Natural killer cell (primary cell): ENCODE measurements at regions of chr4 and their contacts with region 1.

Region 1: DNA sequence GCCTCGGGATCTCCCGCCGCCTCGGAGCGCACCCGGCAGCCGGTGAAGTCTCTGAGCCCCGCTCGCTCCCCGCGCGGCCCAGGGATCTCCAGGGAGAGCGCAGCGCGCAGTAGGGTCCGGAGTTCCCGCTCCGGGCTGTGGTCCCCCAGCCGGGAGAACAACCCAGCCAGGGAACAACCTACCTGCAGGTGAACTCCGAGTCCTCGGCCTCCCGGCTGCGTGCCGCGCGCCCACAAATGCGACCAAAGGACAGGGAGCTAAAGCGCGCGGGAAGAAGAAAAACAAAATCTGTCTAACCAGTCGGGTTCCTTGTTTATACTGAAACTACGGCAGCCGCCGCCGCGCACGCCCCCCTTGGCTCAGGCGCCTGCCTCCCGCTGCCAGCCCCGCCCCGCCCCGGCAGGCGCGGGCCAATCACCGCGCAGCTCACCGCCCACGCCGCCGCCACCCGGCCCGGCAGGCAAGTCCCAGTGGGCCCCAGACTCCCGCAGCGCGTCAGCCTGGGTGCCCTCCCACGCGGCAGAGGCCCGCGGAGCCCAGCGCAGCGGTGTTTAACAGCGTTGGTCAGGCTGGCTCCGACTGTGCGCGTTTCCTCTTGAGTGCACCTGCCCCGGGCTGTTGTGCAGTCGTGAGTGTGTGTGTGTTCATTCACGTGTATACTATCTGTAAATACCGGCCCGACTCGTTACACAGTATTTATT is at the start of gene RASGEF1B:
- DNase-seq: peak; percentile 96
- ATAC-seq: peak; percentile 85 to 96 (median 89)
- H3K4me3 ChIP-seq: peak within 1 kb of the TSS; percentile 97
- H3K4me3 Mint-ChIP-seq: peak within 1 kb of the TSS; percentile 97
- H3K27ac ChIP-seq: peak within 1 kb of the TSS; percentile 99
- H3K27ac Mint-ChIP-seq: peak within 1 kb of the TSS; percentile 82 to 98
- H3K4me1 ChIP-seq: peaks cover 25% of the 10 kb centered on the region
- H3K4me1 Mint-ChIP-seq: peaks cover 46 to 50% of the 10 kb centered on the region in 2 donors
- H3K27me3 ChIP-seq: no peaks in the 10 kb centered on the region
- H3K27me3 Mint-ChIP-seq: no peaks in the 10 kb centered on the region
- CTCF ChIP-seq: no peak
- total RNA-seq, gene RASGEF1B: 42.9 to 106 (median 90.8) TPM

Region 2: DNA sequence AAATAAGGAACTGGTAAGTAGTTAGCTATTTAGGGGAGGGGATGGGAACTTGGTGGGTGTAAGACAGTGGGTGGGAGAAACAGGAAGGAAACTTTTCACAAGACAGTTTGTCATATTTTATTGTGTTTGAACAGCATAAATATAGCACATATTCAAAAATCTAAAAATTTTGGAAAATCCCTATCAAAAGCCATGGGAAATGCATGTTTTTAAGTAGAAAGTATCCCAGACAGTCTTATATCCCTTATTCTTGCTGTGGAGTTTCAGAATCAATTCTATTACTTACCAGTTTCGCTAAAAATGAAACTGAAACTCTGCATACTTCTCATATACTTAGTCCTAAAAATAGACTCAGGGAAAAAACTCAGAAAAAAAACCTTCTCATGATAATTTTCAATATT is 22.3 kb after region 1 on chr4:
- intact Hi-C with region 1: loop called (anchors 1 kb)
- DNase-seq: peak in 1 of 2 donors; percentile 65
- ATAC-seq: peak; percentile 21 to 47 (median 42)
- H3K4me3 ChIP-seq: peak overlapping the region; percentile 29
- H3K4me3 Mint-ChIP-seq: peak overlapping the region; percentile 93
- H3K27ac ChIP-seq: peak overlapping the region; percentile 73
- H3K27ac Mint-ChIP-seq: peak overlapping the region; percentile 92
- H3K4me1 ChIP-seq: peaks cover 19% of the 10 kb centered on the region
- H3K4me1 Mint-ChIP-seq: peaks cover 47 to 55% of the 10 kb centered on the region in 2 donors
- H3K27me3 ChIP-seq: no peaks in the 10 kb centered on the region
- H3K27me3 Mint-ChIP-seq: no peaks in the 10 kb centered on the region
- CTCF ChIP-seq: no peak

Region 3: GRCh38 chr4:81580346-81580993 is 108.7 kb after region 1 on chr4:
- intact Hi-C with region 1: loop called (anchors 10 kb)
- DNase-seq: no peak
- ATAC-seq: no peak
- H3K4me3 ChIP-seq: no peak overlapping the region
- H3K4me3 Mint-ChIP-seq: no peak overlapping the region
- H3K27ac ChIP-seq: no peak overlapping the region
- H3K27ac Mint-ChIP-seq: no peak overlapping the region
- H3K4me1 ChIP-seq: no peaks in the 10 kb centered on the region
- H3K4me1 Mint-ChIP-seq: no peaks in the 10 kb centered on the region
- H3K27me3 ChIP-seq: no peaks in the 10 kb centered on the region
- H3K27me3 Mint-ChIP-seq: peaks cover 4 to 11% of the 10 kb centered on the region in 2 donors
- CTCF ChIP-seq: no peak

Region 4: GRCh38 chr4:81724925-81725329 is 253.2 kb after region 1 on chr4:
- intact Hi-C with region 1: loop called (anchors 5 kb)
- DNase-seq: peak; percentile 30 to 49
- ATAC-seq: peak; percentile 87 to 96 (median 96)
- H3K4me3 ChIP-seq: no peak overlapping the region
- H3K4me3 Mint-ChIP-seq: no peak overlapping the region
- H3K27ac ChIP-seq: no peak overlapping the region
- H3K27ac Mint-ChIP-seq: peak overlapping the region in 1 of 2 donors; percentile 58
- H3K4me1 ChIP-seq: no peaks in the 10 kb centered on the region
- H3K4me1 Mint-ChIP-seq: peaks cover 6 to 7% of the 10 kb centered on the region in 2 donors
- H3K27me3 ChIP-seq: no peaks in the 10 kb centered on the region
- H3K27me3 Mint-ChIP-seq: peaks cover 16 to 40% of the 10 kb centered on the region in 2 donors
- CTCF ChIP-seq: no peak

Region 5: DNA sequence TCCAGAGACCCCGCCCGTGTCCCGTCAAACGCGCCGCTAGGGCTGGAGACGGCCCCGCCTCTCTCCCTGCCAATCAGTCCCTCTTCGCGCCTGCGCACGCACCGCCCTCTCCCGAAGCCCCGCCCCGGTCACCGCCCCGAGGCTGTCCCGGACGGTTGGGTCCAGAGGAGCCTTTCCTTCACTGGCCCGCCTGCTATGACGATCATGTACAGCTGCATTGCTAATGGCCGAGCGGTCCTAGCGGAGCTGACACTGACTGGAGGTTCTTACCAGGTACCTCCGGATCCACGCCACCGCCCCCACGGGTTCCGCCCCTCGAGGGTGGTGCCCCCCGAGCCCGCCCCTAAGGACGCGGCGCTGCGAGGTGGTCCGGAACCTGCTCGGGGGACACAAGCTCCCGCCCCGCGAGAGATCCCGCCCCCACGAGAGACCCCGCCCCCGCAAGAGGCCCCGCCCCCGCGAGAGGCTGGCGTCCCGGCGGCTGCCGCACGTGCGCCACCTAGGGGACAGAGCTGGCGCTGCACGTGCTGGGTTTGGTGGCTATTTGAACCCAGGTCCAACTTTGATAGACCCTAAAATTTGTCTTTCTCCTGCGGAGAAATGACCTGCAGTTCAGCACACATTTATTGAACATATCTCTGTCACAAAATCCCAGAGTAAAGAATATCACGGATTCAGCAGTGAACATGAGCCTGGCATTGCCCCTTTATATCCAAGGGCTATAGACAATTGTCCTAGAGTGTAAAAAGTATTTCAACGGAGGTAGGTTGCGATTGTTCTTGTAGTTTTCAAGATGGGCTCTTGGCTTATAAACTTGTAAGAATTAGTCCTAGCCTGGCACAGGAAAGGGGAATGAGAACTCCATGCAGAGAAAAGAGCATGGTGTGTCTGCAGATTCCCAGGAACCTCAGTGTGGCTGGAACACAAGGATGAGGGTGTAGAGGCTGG is 813.4 kb after region 1 on chr4:
- intact Hi-C with region 1: loop called (anchors 10 kb)
- DNase-seq: peak; percentile 98 to 100
- ATAC-seq: peak; percentile 89 to 96 (median 91)
- H3K4me3 ChIP-seq: peak overlapping the region; percentile 53
- H3K4me3 Mint-ChIP-seq: peak overlapping the region; percentile 82
- H3K27ac ChIP-seq: peak overlapping the region; percentile 87
- H3K27ac Mint-ChIP-seq: peak overlapping the region; percentile 49 to 79
- H3K4me1 ChIP-seq: peaks cover 12% of the 10 kb centered on the region
- H3K4me1 Mint-ChIP-seq: peaks cover 14 to 19% of the 10 kb centered on the region in 2 donors
- H3K27me3 ChIP-seq: no peaks in the 10 kb centered on the region
- H3K27me3 Mint-ChIP-seq: peaks cover 9 to 15% of the 10 kb centered on the region in 2 donors
- CTCF ChIP-seq: peak; percentile 96